ENCODE measurements at regions of chr6 and their contacts with region 1.

Region 1: DNA sequence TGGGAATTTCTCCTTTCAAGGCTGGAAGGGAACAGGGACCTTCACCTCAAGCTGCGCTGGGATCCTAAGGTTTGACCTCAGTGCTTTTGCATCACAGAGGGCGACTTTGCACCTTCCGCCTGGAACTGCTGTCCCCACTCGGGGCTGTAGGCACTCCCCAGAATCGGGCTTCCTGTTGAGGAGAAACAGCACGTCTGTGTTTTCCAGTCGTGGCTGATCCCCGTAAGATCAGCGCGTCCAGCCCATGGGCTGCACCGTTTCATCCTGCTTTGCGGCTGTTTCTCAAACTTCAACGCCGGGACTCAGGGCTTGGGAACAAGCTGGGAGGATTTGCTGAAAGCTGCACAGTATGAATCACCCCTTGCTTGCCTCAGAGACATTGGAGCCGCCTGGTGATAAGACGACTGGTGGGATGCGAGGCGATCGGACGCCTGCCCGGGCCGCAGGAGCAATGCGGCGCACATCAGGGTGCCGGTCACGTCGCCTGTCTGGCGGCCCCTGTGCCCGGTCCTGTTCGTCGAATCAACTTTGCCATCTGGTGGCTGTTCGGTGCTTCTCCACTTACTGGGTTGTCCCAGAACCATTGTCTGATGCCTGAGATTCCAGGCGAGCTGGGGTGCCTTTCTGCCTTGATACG is 53.6 kb upstream of the FRMD1 start:
- DNase-seq: peak; percentile 39 to 49
- ATAC-seq: peak; percentile 72 to 92; a peak in 5 of 6 replicates
- H3K4me3 ChIP-seq: no peak overlapping the region
- H3K27ac ChIP-seq: 0 out of 6 replicates have a peak overlapping the region, but pooled peaks of 1 of the 2 experiments have one; percentile 8
- H3K4me1 ChIP-seq: no peaks in the 10 kb centered on the region
- CTCF ChIP-seq: peak; percentile 45
- EP300 ChIP-seq: no peak
- POLR2A ChIP-seq: no peak
- RAD21 ChIP-seq: peak; percentile 66 to 70

Region 2: GRCh38 chr6:167907837-167908681 is 224.6 kb before region 1 on chr6:
- CTCF ChIA-PET with region 1: interaction called, 28 read pairs
- POLR2A ChIA-PET with region 1: no interaction called
- DNase-seq: peak; percentile 6 to 37
- ATAC-seq: peak; percentile 73 to 83; a peak in 4 of 6 replicates
- H3K4me3 ChIP-seq: no peak overlapping the region
- H3K27ac ChIP-seq: no peak overlapping the region
- H3K4me1 ChIP-seq: no peaks in the 10 kb centered on the region
- CTCF ChIP-seq: peak; percentile 59
- EP300 ChIP-seq: no peak
- POLR2A ChIP-seq: no peak
- RAD21 ChIP-seq: peak; percentile 66 to 75

Region 3: GRCh38 chr6:168060521-168060931 is 72.1 kb before region 1 on chr6:
- CTCF ChIA-PET with region 1: interaction called, 13 read pairs
- POLR2A ChIA-PET with region 1: no interaction called
- DNase-seq: peak; percentile 13 to 57
- ATAC-seq: peak; percentile 52 to 85; a peak in 4 of 6 replicates
- H3K4me3 ChIP-seq: no peak overlapping the region
- H3K27ac ChIP-seq: peak overlapping the region; percentile 51 to 68; a peak in 4 of 6 replicates
- H3K4me1 ChIP-seq: no peaks in the 10 kb centered on the region
- CTCF ChIP-seq: peak; percentile 30
- EP300 ChIP-seq: no peak
- POLR2A ChIP-seq: no peak
- RAD21 ChIP-seq: peak; percentile 54

Region 4: DNA sequence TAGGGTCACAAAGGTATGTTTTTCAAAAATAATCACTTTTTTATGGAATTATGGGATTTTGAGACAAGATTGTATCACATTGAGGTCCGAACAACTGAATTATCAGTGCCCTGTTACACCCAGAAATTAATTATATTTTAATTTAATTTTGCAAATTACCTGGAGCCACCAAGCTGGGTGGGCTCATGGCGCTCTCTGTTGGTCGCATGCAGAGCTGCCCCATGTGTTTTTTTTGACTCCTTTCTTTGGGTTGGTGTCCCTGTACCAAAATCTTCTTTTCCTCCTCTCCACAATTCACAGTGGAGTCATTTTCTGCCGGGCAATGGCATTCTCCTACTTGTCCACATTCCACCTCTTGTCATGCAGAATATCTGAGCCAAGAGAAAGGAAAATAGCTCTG is 14.7 kb before region 1 on chr6:
- CTCF ChIA-PET with region 1: interaction called, 13 read pairs
- POLR2A ChIA-PET with region 1: no interaction called
- DNase-seq: no peak
- ATAC-seq: no peak
- H3K4me3 ChIP-seq: no peak overlapping the region
- H3K27ac ChIP-seq: no peak overlapping the region
- H3K4me1 ChIP-seq: no peaks in the 10 kb centered on the region
- CTCF ChIP-seq: no peak
- EP300 ChIP-seq: no peak
- POLR2A ChIP-seq: no peak
- RAD21 ChIP-seq: peak; percentile 27 to 42; a peak in 3 of 5 replicates

Region 5: GRCh38 chr6:168377484-168377855 is 244.8 kb after region 1 on chr6:
- CTCF ChIA-PET with region 1: no interaction called
- POLR2A ChIA-PET with region 1: no interaction called
- DNase-seq: no peak
- ATAC-seq: no peak
- H3K4me3 ChIP-seq: no peak overlapping the region
- H3K27ac ChIP-seq: no peak overlapping the region
- H3K4me1 ChIP-seq: no peaks in the 10 kb centered on the region
- CTCF ChIP-seq: no peak
- EP300 ChIP-seq: no peak
- POLR2A ChIP-seq: no peak
- RAD21 ChIP-seq: no peak